ENCODE measurements at regions of chr7 and their contacts with region 1.

Region 1: DNA sequence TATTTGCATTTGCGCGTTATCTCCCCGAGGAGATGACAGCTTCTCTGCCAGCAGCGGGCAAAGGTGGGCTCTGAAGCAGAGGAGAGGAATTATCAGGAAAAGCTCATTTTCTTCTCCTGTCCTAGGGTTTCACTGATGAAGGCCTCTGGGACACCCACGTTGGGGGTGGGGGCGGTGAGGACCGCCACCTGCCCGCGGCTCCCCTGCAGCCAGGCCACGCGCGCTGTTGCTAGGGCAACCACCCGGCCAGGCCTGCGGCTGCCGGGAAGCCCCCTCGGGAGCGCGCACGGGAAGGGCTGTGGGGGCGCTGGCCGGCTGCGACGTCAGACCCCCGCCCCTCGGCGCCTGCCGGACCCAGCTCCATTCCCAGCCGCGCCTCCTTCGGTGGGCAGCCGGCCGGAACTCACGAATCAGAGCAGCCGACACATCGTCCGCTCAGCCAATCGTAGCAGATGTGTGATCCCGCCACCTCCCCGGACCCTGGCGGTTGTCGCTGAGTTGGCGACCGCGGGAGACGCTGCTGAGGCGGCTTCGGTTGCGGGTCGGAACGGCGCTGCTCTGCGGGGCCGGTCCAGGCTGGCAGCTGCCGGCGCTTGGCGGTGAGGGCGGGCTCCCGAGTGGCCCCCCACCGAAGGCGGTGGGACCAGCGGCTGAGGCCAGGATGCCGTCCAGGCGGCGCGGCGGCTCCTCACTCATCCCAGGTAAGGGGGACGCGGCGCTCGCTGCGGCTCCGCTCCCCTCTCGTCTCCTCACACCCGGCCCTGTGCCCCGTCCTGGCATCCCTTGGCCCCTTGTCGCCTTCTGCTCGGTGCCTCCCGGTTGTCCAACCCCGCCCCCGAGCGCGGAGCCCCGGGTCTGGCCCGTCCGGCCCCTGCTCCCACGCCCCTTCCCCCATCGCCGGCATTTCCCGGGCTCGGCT is at the start of gene TPST1:
- H3K4me3 ChIP-seq: peak within 1 kb of the TSS; percentile 94
- H3K27ac ChIP-seq: peak within 1 kb of the TSS; percentile 81
- H3K4me1 ChIP-seq: peaks cover 5% of the 10 kb centered on the region
- CTCF ChIP-seq: peak; percentile 95

Region 2: GRCh38 chr7:66114793-66115649 is 90.1 kb before region 1 on chr7 and contains the start of gene CRCP:
- CTCF ChIA-PET with region 1: no interaction called
- POLR2A ChIA-PET with region 1: interaction called, 13 read pairs
- H3K4me3 ChIP-seq: peak within 1 kb of the TSS; percentile 85
- H3K27ac ChIP-seq: peak within 1 kb of the TSS; percentile 93
- H3K4me1 ChIP-seq: peaks cover 7% of the 10 kb centered on the region
- CTCF ChIP-seq: peak; percentile 74

Region 3: DNA sequence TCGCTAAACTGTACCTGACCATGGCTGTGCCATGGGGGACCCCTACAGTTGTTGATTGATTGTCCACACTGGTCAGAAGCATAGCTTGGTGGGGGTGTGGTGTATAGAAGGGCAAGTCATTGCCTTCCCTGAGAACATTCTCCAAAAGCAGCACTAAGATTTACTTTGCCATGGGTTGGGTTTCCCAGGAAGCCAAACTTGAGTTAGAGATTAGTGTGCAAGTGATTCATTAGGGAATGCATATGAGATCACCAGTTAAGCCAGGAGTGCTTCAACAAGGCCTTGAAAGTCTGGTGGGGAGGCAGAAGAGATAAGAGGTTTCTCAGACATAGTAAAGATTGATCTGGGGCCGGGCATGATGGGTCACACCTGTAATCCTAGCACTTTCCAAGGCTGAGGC is 21.4 kb before region 1 on chr7:
- CTCF ChIA-PET with region 1: interaction called, 3 read pairs
- POLR2A ChIA-PET with region 1: interaction called, 15 read pairs
- H3K4me3 ChIP-seq: no peak overlapping the region
- H3K27ac ChIP-seq: no peak overlapping the region
- H3K4me1 ChIP-seq: no peaks in the 10 kb centered on the region
- CTCF ChIP-seq: no peak

Region 4: GRCh38 chr7:66219805-66220204 is 14.7 kb after region 1 on chr7:
- CTCF ChIA-PET with region 1: interaction called, 12 read pairs
- POLR2A ChIA-PET with region 1: interaction called, 8 read pairs
- H3K4me3 ChIP-seq: no peak overlapping the region
- H3K27ac ChIP-seq: no peak overlapping the region
- H3K4me1 ChIP-seq: no peaks in the 10 kb centered on the region
- CTCF ChIP-seq: no peak

Region 5: DNA sequence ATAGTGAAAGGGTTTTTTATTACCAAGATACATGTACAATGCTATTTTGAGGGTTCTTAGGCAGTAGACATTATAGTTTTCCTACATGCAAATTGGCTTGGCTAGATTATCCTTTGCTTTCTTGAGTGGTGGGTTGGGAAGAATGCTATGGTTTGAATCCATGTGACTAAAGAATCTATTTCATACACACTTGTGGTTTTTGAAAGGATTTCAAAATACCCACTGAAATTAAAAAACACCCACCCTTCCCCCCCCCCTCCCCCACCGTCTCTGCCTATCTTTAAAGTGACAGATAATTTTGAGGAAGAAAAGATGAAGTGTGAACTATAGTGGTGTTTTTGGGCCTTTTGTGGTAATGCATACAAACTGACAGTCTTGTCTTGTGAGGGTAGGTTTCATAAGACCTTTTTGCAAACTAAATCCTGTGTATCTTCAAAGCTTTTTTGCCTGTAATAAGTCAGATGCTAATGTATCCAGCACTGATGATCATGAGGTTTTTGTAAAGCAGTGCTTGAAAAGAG is 91.0 kb after region 1 on chr7:
- CTCF ChIA-PET with region 1: no interaction called
- POLR2A ChIA-PET with region 1: no interaction called
- H3K4me3 ChIP-seq: no peak overlapping the region
- H3K27ac ChIP-seq: no peak overlapping the region
- H3K4me1 ChIP-seq: no peaks in the 10 kb centered on the region
- CTCF ChIP-seq: no peak

Region 6: DNA sequence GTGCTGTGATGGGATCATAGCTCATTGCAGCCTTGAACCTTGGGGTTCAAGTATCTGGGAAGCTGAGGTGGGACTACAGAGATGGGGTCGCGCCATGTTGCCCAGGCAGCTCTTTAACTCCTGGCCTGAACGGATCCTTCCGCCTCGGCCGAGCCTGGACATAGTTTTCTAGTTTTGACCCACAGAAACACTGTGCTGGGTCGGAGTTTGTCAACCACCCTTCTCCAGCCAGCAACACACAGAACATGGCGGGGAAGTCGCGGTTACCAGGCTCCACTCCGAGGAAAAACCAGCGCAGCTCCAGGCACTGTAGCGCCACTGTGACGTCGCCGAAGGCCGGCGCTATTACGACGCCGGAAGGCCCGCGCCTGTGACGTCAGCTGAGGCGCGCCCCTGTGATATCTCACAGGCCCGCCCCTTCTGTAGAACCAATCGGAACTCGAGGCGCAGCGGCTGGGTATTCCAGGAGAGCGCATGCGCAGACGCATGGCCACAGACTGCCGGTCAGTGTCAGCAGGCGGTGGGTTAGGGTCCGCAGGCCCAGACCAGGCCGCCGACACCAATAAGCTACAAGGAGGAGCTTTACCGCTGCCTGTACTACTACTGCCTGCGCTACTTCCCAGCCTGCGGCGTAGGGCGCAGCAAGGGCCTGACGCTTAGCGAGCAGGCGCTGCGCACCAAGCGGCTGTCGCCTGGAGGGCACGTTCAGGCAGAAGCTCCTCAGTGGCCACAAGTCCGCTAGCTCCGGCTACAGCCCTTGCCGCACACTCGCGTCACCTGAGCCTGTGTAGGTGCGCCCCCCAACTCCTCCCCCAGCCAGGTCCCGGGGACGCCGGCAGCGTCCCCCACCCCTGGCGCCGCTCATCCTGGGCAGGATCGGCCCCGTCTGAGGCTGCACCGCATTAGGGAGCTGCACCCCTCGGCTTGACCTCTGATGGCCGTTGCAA is 288.4 kb after region 1 on chr7:
- CTCF ChIA-PET with region 1: no interaction called
- POLR2A ChIA-PET with region 1: interaction called, 21 read pairs
- H3K4me3 ChIP-seq: peak overlapping the region; percentile 81
- H3K27ac ChIP-seq: peak overlapping the region; percentile 72
- H3K4me1 ChIP-seq: no peaks in the 10 kb centered on the region
- CTCF ChIP-seq: peak; percentile 59; the same call in 1 of the 2 replicates

Region 7: DNA sequence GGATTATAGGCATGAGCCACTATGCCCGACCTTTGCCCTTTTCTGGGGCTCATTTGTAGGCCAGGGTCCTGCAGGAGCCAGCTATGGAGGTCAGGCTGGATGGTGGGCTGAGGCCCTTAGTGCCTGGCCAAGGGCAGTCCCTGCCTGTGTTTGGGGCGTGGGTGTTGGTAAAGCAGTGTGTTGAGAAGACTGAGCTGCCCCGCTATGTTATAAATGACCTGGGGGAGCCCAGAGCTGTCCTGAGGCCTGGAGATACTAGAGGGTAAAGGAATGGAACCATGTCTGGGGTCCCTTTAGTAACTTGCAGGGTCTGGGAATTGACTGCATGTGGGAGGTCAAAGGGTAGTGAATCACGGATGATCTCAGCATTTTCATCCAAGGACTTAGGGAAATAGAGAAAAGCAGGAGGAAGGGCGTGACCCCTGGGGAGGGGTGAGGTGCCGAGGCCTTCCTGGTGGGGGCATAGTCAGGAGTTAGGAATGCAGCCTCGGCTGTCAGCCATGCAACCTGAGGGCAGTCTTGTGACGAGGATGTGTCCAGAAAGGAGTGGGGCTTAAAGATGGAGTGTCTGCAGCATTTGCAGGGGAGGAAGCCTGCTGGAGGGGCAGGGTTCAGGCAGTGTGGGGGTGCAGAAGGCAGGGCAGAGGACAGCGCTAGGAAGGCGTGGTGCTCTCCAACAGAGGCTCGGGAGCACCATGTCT is 747.4 kb after region 1 on chr7:
- CTCF ChIA-PET with region 1: no interaction called
- POLR2A ChIA-PET with region 1: no interaction called
- H3K4me3 ChIP-seq: no peak overlapping the region
- H3K27ac ChIP-seq: no peak overlapping the region
- H3K4me1 ChIP-seq: no peaks in the 10 kb centered on the region
- CTCF ChIP-seq: no peak

Measured in HEK293 (cell line).